ENCODE measurements at regions of chr20 and their contacts with region 1.

Region 1: GRCh38 chr20:35883778-35884540 is 70.3 kb downstream of the SCAND1 start:
- DNase-seq: peak; percentile 88
- H3K4me3 ChIP-seq: no peak overlapping the region
- H3K4me3 Mint-ChIP-seq: peak overlapping the region; percentile 13
- H3K27ac Mint-ChIP-seq: peak overlapping the region; percentile 68
- H3K4me1 ChIP-seq: peaks cover 14% of the 10 kb centered on the region
- H3K4me1 Mint-ChIP-seq: peaks cover 7% of the 10 kb centered on the region
- H3K27me3 ChIP-seq: no peaks in the 10 kb centered on the region
- H3K27me3 Mint-ChIP-seq: no peaks in the 10 kb centered on the region
- CTCF ChIP-seq: peak; percentile 94 to 96

Region 2: DNA sequence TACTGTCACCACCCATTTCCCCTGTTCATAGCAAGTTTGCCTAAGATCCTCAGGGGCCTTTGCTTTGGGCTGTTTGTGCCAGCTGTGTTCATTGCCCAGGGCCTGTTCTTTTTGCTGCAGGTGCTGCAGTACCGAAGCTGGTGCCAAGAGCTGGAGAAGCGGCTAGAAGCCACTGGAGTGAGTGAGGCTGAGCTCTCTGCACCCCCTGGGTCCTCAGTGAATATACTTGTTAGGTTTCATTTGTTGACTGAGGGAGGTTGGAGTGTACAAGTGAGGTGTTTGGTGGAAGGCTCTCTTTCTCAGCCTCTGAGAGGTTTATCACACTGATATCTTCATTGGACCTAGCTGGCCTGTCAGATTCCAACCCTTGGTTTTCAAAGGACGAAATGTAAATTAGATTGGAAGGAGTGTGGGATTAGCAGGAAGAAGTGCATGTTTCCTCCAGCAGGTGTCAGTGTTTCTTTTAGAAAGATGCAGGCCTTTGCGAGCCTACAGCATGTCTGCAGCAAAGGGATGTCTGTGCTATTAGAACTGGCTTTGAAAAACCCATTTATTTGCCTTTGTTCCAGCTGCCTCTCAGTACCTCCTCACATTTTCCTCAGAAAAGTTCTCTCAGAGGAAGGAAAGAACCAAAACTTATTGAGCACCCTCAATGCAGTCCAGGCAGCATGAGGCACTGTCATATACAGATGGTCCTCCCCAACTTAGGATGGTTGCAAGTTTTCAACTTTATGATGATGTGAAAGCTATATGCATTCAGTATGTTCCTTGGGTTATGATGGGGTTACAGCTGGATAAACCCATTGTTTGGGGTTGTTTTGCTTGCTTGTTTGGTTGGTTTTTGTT is 420.3 kb before region 1 on chr20:
- CTCF ChIA-PET with region 1: interaction called, 3 read pairs
- POLR2A ChIA-PET with region 1: no interaction called
- intact Hi-C with region 1: loop called (anchors 1 kb)
- DNase-seq: peak; percentile 83 to 88
- H3K4me3 ChIP-seq: no peak overlapping the region
- H3K4me3 Mint-ChIP-seq: no peak overlapping the region
- H3K27ac Mint-ChIP-seq: no peak overlapping the region
- H3K4me1 ChIP-seq: peaks cover 13% of the 10 kb centered on the region
- H3K4me1 Mint-ChIP-seq: peaks cover 18% of the 10 kb centered on the region
- H3K27me3 ChIP-seq: no peaks in the 10 kb centered on the region
- H3K27me3 Mint-ChIP-seq: no peaks in the 10 kb centered on the region
- CTCF ChIP-seq: peak; percentile 96 to 97

Region 3: DNA sequence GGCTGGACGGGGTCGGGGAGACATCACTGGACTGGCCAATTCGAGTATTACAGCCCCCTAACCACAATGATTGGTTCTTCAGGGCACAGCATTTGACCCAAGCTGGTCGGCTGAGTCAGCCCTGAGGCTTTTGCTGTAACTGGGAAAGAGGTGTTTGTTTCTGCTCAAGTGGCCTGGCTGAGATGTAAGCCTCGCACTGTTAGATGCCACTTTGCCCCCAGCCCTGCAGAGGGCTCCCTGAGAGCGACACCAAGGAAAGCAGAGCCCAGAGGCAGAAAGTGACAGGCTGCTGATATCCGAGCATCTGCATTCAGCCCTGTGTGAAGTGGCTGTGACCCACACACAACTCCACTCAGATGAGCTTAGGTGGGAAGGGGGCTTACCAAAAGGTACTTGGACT is 322.7 kb before region 1 on chr20:
- CTCF ChIA-PET with region 1: interaction called, 3 read pairs
- POLR2A ChIA-PET with region 1: no interaction called
- intact Hi-C with region 1: loop called (anchors 1 kb)
- DNase-seq: peak; percentile 75 to 79
- H3K4me3 ChIP-seq: no peak overlapping the region
- H3K4me3 Mint-ChIP-seq: no peak overlapping the region
- H3K27ac Mint-ChIP-seq: no peak overlapping the region
- H3K4me1 ChIP-seq: no peaks in the 10 kb centered on the region
- H3K4me1 Mint-ChIP-seq: peaks cover 4% of the 10 kb centered on the region
- H3K27me3 ChIP-seq: no peaks in the 10 kb centered on the region
- H3K27me3 Mint-ChIP-seq: no peaks in the 10 kb centered on the region
- CTCF ChIP-seq: peak; percentile 51 to 86

Region 4: DNA sequence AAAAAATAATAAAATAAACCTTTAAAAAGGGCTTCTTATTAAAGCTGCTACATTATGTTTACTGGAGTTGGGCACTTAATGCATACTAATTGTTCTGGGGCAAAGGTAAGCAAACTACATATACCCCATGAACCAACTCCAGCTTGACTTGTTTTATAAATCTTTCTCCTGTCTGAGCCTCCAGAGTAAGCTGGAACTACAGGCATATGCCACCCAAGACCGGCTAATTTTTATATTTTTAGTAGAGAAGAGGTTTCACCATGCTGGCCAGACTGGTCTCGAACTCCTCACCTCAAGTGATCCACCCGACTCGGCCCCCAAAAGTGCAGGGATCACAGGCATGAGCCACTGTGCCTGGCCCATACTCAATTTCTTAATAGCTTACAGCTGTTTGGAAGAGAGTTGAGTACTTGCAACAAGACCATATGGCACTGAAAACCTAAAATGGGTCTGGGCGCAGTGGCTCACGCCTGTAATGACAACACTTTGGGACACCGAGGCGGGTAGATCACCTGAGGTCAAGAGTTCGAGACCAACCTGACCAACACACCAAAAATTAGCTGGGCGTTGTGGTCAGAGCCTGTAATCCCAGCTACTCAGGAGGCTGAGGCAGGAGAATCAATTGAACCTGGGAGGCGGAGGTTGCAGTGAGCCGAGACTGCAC is 164.9 kb before region 1 on chr20:
- CTCF ChIA-PET with region 1: no interaction called
- POLR2A ChIA-PET with region 1: no interaction called
- intact Hi-C with region 1: loop called (anchors 5 kb)
- DNase-seq: no peak
- H3K4me3 ChIP-seq: no peak overlapping the region
- H3K4me3 Mint-ChIP-seq: no peak overlapping the region
- H3K27ac Mint-ChIP-seq: no peak overlapping the region
- H3K4me1 ChIP-seq: 0 out of 2 replicates have a peak, but pooled peaks cover 3% of the 10 kb centered on the region
- H3K4me1 Mint-ChIP-seq: peaks cover 7% of the 10 kb centered on the region
- H3K27me3 ChIP-seq: no peaks in the 10 kb centered on the region
- H3K27me3 Mint-ChIP-seq: no peaks in the 10 kb centered on the region
- CTCF ChIP-seq: no peak

Region 5: GRCh38 chr20:35849706-35850105 is 34.3 kb before region 1 on chr20:
- CTCF ChIA-PET with region 1: interaction called, 13 read pairs
- POLR2A ChIA-PET with region 1: no interaction called
- intact Hi-C with region 1: loop called (anchors 2 kb)
- DNase-seq: no peak
- H3K4me3 ChIP-seq: no peak overlapping the region
- H3K4me3 Mint-ChIP-seq: no peak overlapping the region
- H3K27ac Mint-ChIP-seq: no peak overlapping the region
- H3K4me1 ChIP-seq: peaks cover 9% of the 10 kb centered on the region
- H3K4me1 Mint-ChIP-seq: peaks cover 13% of the 10 kb centered on the region
- H3K27me3 ChIP-seq: no peaks in the 10 kb centered on the region
- H3K27me3 Mint-ChIP-seq: no peaks in the 10 kb centered on the region
- CTCF ChIP-seq: no peak